PC-3 (cell line): ENCODE measurements at regions of chr20 and their contacts with region 1.

Region 1: GRCh38 chr20:45392733-45393132 is 14.6 kb upstream of the TP53TG5 start:
- DNase-seq: peak; percentile 46
- ATAC-seq: peak; percentile 82
- H3K4me3 ChIP-seq: no peak overlapping the region
- H3K27ac ChIP-seq: no peak overlapping the region
- H3K4me1 ChIP-seq: peaks cover 8% of the 10 kb centered on the region
- H3K27me3 ChIP-seq: no peaks in the 10 kb centered on the region
- CTCF ChIP-seq: peak; percentile 57

Region 2: GRCh38 chr20:45337367-45338120 is 55.2 kb before region 1 on chr20:
- CTCF ChIA-PET with region 1: no interaction called
- POLR2A ChIA-PET with region 1: interaction called, 31 read pairs
- intact Hi-C with region 1: no loop called
- DNase-seq: peak; percentile 78
- ATAC-seq: peak; percentile 11
- H3K4me3 ChIP-seq: peak overlapping the region; percentile 15; the same call in 1 of the 2 replicates
- H3K27ac ChIP-seq: peak overlapping the region; percentile 95
- H3K4me1 ChIP-seq: peaks cover 70% of the 10 kb centered on the region
- H3K27me3 ChIP-seq: no peaks in the 10 kb centered on the region
- CTCF ChIP-seq: no peak

Region 3: DNA sequence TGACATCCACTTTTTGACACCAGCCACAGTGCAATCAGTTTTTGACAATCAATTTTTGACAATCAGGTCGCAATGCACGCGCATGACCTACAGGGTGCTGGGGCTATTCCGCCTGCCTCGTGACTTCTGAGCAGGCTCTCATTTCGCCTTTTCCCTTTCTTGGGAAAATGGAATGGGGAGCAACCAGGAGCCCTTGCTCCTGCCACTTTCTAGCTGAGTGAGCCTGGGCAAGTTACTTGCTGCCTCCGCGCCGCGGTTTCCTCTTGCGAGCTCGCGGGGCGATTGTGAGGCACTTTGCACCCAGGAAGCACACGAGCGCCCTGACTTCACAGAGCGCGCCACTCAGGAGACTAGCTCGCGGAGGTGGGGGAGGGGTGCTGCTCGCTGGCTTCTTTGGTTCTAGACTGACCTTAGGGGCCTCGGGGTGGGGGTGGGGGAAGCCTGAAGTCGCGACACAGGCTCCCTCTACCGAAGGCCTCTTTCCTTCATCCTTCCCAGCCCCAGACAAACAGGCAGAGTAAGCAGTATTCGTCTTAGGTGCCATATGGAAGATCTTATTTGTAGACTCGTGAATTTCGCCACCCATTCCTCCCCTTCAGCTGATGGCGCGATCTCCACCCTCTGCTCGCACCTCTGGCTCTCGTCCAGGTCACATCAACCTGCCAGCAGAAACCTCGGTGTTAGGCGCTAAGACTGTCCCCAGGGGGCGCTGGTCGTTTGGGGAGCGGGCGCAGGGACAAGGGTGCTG is 19.2 kb before region 1 on chr20:
- CTCF ChIA-PET with region 1: interaction called, 10 read pairs
- POLR2A ChIA-PET with region 1: no interaction called
- intact Hi-C with region 1: no loop called
- DNase-seq: peak; percentile 93
- ATAC-seq: peak; percentile 94
- H3K4me3 ChIP-seq: peak overlapping the region; percentile 23; the same call in 1 of the 2 replicates
- H3K27ac ChIP-seq: no peak overlapping the region
- H3K4me1 ChIP-seq: no peaks in the 10 kb centered on the region; the same call in 1 of the 2 replicates
- H3K27me3 ChIP-seq: no peaks in the 10 kb centered on the region
- CTCF ChIP-seq: peak; percentile 97